ENCODE measurements at regions of chr2 and their contacts with region 1.

Region 1: GRCh38 chr2:240434728-240435456 is 571 bp upstream of the GPC1 start:
- DNase-seq: peak; percentile 93 to 96 (median 95)
- ATAC-seq: peak; percentile 68 to 84 (median 82)
- H3K4me3 ChIP-seq: peak overlapping the region; percentile 6 to 87 (median 64)
- H3K27ac ChIP-seq: peak overlapping the region; percentile 70 to 97 (median 90)
- H3K4me1 ChIP-seq: peaks cover 0 to 47% (median 25%) of the 10 kb centered on the region in 12 donors
- H3K27me3 ChIP-seq: peaks cover 0 to 32% (median 4%) of the 10 kb centered on the region in 9 donors
- CTCF ChIP-seq: no peak
- POLR2A ChIP-seq: no peak

Region 2: GRCh38 chr2:239533569-239534316 is 901.1 kb before region 1 on chr2:
- intact Hi-C with region 1: no loop called
- DNase-seq: peak in 3 of 5 donors; percentile 48 to 57 (median 57)
- ATAC-seq: peak; percentile 65 to 81 (median 74)
- H3K4me3 ChIP-seq: no peak overlapping the region
- H3K27ac ChIP-seq: no peak overlapping the region
- H3K4me1 ChIP-seq: peaks cover 0 to 6% (median 0%) of the 10 kb centered on the region in 12 donors
- H3K27me3 ChIP-seq: peaks cover 0 to 18% (median 0%) of the 10 kb centered on the region in 9 donors
- CTCF ChIP-seq: no peak
- POLR2A ChIP-seq: no peak

Region 3: DNA sequence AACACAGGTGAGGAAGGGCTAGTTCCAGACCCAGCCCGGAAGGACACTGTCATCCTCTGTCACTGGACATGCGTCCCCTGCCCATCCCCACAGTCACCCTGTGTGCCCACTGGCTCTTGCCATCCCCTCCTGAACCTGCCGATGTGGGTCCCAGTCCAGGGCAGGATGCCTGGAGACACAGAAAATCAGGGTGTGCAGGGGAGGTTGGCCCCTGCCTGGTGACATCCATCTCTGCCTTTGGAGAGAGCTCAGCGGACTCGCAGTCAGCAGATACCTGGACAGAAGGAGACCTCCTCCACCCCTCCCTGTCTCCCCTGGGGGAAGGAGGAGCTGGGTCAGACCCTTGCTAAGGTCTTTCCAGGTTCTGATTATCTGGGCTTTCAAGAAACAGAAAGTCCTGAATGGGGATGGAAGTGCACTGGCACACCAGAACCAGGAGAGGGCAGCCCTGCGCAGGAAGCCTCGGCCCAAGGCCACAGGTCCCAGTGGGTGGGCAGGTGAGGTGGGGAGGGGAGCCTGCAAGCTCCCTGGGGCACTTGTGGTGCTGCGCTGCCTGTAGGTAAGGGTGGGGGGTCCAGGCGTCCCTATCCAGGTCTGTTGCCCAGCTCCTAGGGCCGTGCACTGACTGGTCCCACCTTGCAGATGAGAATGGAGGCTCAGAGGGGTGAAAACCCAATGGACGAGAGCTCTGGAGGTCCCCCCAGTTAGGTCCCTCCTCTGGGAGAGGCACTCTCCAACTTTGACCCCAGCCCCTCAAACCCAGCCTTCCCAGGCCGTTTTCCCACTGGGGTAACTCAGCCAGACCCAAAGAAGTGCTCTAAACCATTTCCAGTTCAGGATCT is 284.7 kb before region 1 on chr2:
- intact Hi-C with region 1: loop called in 4 of 10 experiments (anchors 1 to 5 kb)
- DNase-seq: peak in 1 of 5 donors; percentile 37
- ATAC-seq: peak in 3 of 4 donors; percentile 40 to 61 (median 53)
- H3K4me3 ChIP-seq: no peak overlapping the region
- H3K27ac ChIP-seq: no peak overlapping the region
- H3K4me1 ChIP-seq: no peaks in the 10 kb centered on the region
- H3K27me3 ChIP-seq: peaks cover 0 to 32% (median 0%) of the 10 kb centered on the region in 9 donors
- CTCF ChIP-seq: peak; percentile 36 to 73 (median 54)
- POLR2A ChIP-seq: no peak

Region 4: DNA sequence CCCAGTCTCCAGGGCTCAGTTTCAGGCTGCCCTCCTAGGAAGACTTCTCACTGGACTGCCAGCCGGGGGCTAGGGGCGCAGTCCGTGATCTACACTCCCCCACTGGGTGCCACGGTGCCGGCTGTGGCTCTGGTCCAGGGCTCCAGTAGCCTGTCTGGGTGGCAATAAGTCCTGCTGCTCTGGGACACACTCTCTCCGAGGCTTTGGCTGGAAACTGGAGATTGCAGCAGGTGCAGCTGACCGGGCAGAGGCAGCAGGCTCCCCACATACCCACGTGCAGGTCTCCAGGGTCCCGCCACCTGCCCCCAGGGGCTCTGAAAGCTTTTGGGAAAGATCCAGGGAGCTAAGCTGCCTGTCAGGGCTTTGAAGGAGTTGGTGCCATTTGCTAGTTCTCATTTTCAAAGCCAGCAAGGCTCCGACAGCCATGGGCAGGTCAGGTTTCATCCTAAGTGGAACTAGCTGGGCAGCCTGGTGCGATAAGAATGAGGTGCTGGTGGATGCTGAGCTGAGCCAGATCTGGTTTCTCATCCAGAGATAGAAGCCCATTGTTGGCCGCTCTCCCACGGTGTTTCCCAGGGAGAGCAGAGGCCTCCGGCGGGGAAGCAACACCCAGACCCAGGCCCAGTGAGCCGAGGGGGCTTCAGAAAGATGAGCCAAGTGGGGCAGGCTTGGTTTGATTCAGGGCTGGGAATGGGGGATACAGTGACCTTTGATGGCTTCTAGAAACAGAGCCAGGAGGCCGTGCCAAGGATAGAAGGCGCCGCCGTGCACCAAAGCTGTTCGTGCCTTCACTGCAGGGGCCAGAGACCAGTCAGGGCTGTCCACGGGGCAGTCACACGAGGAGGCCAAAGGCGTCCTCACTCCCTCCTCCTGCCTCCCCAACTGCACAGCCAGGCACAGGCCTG is 141.1 kb before region 1 on chr2:
- intact Hi-C with region 1: loop called in 4 of 10 experiments (anchors 2 to 5 kb)
- DNase-seq: peak; percentile 44 to 83 (median 65)
- ATAC-seq: peak in 3 of 4 donors; percentile 53 to 73 (median 71)
- H3K4me3 ChIP-seq: no peak overlapping the region
- H3K27ac ChIP-seq: peak overlapping the region in 11 of 12 donors; percentile 25 to 83 (median 79)
- H3K4me1 ChIP-seq: peaks cover 0 to 54% (median 14%) of the 10 kb centered on the region in 12 donors
- H3K27me3 ChIP-seq: no peaks in the 10 kb centered on the region
- CTCF ChIP-seq: no peak
- POLR2A ChIP-seq: no peak

Region 5: GRCh38 chr2:240298803-240299709 is 135.8 kb before region 1 on chr2:
- intact Hi-C with region 1: loop called in 4 of 10 experiments (anchors 2 to 5 kb)
- DNase-seq: peak in 1 of 5 donors; percentile 18
- ATAC-seq: no peak
- H3K4me3 ChIP-seq: no peak overlapping the region
- H3K27ac ChIP-seq: no peak overlapping the region
- H3K4me1 ChIP-seq: peaks cover 0 to 35% (median 6%) of the 10 kb centered on the region in 12 donors
- H3K27me3 ChIP-seq: peaks cover 0 to 3% (median 0%) of the 10 kb centered on the region in 9 donors
- CTCF ChIP-seq: no peak
- POLR2A ChIP-seq: no peak

Region 6: DNA sequence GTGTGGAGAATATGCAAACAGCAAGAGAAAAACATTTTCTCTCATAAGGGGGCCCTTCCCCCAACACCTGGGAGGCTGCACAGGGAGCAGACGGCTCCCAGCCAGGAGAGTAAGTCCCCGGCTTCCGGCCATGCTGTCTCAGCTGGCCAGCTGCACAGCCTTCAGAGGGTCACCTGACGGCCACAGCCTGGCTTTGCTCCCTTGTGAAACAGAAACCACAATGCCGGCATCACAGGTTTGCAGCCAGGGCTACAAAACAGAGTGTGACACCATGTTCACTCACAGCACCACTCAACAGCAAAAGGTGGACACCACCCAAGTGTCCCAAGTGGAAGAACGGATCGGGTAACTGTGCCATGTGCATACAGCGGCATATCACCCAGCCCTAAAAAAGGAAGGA is 86.4 kb before region 1 on chr2:
- intact Hi-C with region 1: loop called in 1 of 10 experiments (anchors 5 kb)
- DNase-seq: peak in 1 of 5 donors; percentile 5
- ATAC-seq: peak in 1 of 4 donors; percentile 18
- H3K4me3 ChIP-seq: no peak overlapping the region
- H3K27ac ChIP-seq: no peak overlapping the region
- H3K4me1 ChIP-seq: peaks cover 0 to 20% (median 0%) of the 10 kb centered on the region in 12 donors
- H3K27me3 ChIP-seq: peaks cover 0 to 3% (median 0%) of the 10 kb centered on the region in 9 donors
- CTCF ChIP-seq: no peak
- POLR2A ChIP-seq: no peak

Region 7: DNA sequence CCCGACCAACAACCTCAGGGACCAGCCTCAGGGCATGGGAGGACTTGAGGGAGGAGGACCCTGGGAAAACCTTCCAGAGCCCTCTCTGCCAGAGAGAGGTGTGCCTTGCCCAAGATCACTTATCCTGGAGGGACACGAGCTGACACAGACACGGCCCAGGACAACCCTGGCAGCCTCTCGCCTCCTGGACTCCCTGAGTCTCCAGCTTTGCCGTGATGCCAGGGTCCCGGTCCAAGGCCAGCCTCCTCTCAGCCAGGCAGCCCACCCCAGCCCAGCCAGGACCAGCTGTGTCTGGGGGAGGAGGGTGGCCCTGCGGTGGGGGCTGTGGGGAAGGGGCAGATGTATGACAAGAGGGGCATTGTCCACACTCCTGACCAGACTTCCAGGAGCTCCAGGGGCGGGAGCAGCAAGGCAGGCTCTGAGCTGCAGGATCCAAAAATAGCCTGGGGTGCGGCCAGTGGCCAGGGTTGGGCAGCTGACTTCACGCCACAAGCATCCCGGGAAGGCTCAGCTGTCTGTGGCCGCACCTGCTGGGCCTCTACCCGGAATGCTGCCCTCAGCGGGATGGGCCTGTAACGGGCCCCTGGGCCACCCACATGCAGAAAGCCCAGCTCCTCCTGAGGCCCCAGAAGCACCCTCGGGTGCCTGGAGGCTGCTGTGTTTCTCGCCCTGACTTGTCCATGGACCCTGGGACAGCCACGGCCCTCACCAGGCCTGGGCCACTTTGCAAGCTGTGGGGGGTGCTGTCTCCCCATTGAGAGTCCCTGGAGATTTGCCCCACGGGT is 64.9 kb before region 1 on chr2:
- intact Hi-C with region 1: loop called in 6 of 10 experiments (anchors 2 to 10 kb)
- DNase-seq: peak; percentile 85 to 91 (median 86)
- ATAC-seq: peak; percentile 75 to 90 (median 84)
- H3K4me3 ChIP-seq: no peak overlapping the region
- H3K27ac ChIP-seq: peak overlapping the region; percentile 75 to 99 (median 92)
- H3K4me1 ChIP-seq: peaks cover 0 to 74% (median 31%) of the 10 kb centered on the region in 12 donors
- H3K27me3 ChIP-seq: no peaks in the 10 kb centered on the region
- CTCF ChIP-seq: peak in 2 of 12 donors; percentile 9 to 13
- POLR2A ChIP-seq: no peak

Region 8: GRCh38 chr2:240469239-240469636 is 34.3 kb after region 1 on chr2:
- intact Hi-C with region 1: no loop called
- DNase-seq: peak in 4 of 5 donors; percentile 4 to 37 (median 14)
- ATAC-seq: peak in 3 of 4 donors; percentile 3 to 12 (median 10)
- H3K4me3 ChIP-seq: no peak overlapping the region
- H3K27ac ChIP-seq: no peak overlapping the region
- H3K4me1 ChIP-seq: peaks cover 0 to 17% (median 7%) of the 10 kb centered on the region in 12 donors
- H3K27me3 ChIP-seq: no peaks in the 10 kb centered on the region
- CTCF ChIP-seq: no peak
- POLR2A ChIP-seq: no peak

Region 9: GRCh38 chr2:240856151-240856980 is 421.5 kb after region 1 on chr2:
- intact Hi-C with region 1: no loop called
- DNase-seq: no peak
- ATAC-seq: no peak
- H3K4me3 ChIP-seq: no peak overlapping the region
- H3K27ac ChIP-seq: no peak overlapping the region
- H3K4me1 ChIP-seq: no peaks in the 10 kb centered on the region
- H3K27me3 ChIP-seq: no peaks in the 10 kb centered on the region
- CTCF ChIP-seq: peak in 2 of 12 donors; percentile 16 to 27
- POLR2A ChIP-seq: no peak

Measured in heart left ventricle (tissue), 16 donors.